ENCODE measurements at regions of chr22 and their contacts with region 1.

Region 1: DNA sequence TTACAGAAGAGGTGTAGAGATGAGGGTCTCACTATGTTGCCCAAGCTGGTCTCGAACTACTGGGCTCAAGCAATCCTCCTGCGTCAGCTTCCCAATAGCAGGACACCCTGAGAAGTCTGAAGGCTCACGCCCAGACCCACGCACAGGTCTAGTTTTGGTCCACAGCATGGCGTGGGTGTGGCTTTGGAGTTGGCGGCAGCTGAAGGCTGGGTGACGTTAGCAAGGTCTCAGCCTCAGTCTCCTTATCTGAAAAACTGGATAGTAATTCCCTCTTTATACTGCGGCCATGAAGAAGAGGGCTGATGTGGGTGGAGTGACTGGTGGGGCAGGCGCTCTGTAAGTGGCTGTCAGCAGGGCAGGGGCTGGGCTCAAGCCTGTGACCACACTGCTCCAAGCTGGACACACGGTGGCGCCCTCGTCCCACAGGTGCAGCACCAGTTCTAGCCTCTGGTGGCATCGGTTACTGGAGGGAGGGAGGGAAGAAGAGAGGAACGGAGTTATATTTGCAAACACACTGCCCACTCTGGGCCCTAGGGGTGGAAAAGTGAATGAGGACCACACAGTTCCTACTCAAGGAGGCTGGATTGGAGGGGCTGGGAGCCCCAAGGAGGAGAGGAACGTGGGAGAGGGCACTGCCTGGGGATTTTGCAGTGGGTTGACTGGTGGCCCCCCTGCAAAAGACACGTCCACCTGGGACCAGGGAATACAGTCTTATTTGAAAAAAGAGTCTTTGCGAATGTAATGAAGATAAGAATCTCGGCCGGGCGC is 19.6 kb upstream of the CARD10 start:
- DNase-seq: peak; percentile 91 to 95 (median 94)
- H3K4me3 ChIP-seq: no peak overlapping the region
- H3K27ac ChIP-seq: no peak overlapping the region
- H3K4me1 ChIP-seq: peaks cover 1% of the 10 kb centered on the region
- H3K27me3 ChIP-seq: no peaks in the 10 kb centered on the region
- CTCF ChIP-seq: peak; percentile 94 to 100 (median 99)
- EP300 ChIP-seq: no peak
- POLR2A ChIP-seq: peak; percentile 31

Region 2: GRCh38 chr22:37457093-37457893 is 81.5 kb before region 1 on chr22:
- intact Hi-C with region 1: no loop called
- DNase-seq: peak; percentile 15 to 61 (median 46)
- H3K4me3 ChIP-seq: no peak overlapping the region
- H3K27ac ChIP-seq: no peak overlapping the region
- H3K4me1 ChIP-seq: peaks cover 3% of the 10 kb centered on the region
- H3K27me3 ChIP-seq: no peaks in the 10 kb centered on the region
- CTCF ChIP-seq: peak in 1 of 3 donors; percentile 18
- EP300 ChIP-seq: no peak
- POLR2A ChIP-seq: no peak

Region 3: DNA sequence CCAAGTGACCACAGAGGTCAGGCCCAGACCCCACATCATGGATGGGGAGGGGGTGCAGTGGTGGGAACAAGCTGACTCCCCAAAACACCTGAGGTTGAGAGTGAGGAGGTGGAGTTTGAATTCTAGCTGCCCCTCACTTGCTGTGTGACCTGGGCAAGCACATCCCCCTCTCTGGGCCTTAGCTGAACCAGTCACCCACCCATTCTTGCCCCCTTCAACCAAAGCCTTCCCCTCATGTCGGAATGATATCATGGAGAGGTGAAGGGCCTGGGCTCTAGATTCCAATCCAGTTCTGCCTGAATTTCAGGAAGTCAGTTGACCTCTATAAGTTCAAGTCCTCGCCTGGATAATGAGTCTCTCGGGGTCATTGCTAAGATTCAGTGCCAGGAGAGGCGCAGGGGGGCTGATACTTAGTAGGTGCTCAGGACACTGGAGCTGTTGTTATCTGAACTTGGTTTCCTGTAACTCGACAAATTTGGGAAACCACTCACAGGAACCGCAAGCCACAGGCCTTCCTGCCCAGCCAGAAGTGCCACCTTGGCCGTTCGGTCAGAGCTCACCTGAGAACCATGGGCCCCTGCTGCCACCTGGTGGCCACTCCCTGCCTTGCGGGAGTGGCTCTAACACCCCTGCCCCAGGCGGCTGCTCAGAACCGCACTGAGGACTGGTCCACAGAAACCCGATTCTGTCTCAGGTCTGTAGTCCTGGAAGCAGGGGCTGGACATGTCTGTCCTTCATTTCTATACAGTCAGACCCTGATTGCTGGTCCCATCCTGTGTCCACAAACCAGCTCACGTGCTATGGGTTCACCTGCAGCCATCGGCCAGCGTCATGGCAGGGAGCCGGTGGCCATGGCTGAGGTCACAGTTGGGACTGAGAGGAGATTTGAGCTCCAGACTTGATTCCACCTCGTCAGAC is 28.4 kb after region 1 on chr22:
- intact Hi-C with region 1: loop called in 2 of 4 experiments (anchors 2 kb)
- DNase-seq: peak; percentile 71 to 89 (median 87)
- H3K4me3 ChIP-seq: no peak overlapping the region
- H3K27ac ChIP-seq: peak overlapping the region in 1 of 2 donors; percentile 25
- H3K4me1 ChIP-seq: peaks cover 17% of the 10 kb centered on the region
- H3K27me3 ChIP-seq: no peaks in the 10 kb centered on the region
- CTCF ChIP-seq: peak; percentile 87 to 96 (median 92)
- EP300 ChIP-seq: no peak
- POLR2A ChIP-seq: no peak

Region 4: DNA sequence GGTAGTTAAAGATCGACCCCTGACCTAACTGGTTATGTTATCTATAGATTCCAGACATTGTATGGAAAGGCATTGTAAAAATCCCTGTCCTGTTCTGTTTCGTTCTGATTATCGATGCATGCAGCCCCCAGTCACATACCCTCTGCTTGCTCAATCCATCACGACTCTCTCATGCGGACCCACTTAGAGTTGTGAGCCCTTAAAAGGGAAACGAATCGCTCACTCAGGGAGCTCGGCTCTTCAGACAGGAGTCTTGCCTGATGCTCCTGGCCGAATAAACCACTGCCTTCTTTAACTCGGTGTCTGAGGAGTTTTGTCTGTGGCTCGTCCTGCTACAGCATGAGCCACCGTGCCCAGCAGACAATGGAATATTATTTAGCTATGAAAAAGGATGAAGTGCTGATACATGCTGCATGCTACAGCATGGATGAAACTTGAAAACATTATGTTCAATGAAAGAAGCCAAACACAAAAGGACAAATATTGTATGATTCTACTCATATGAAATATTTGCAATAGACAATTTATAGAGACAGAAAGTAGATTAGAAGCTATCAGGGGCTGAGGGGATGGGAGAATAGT is 53.1 kb after region 1 on chr22:
- intact Hi-C with region 1: loop called (anchors 2 to 10 kb)
- DNase-seq: no peak
- H3K4me3 ChIP-seq: no peak overlapping the region
- H3K27ac ChIP-seq: no peak overlapping the region
- H3K4me1 ChIP-seq: no peaks in the 10 kb centered on the region
- H3K27me3 ChIP-seq: no peaks in the 10 kb centered on the region
- CTCF ChIP-seq: no peak
- EP300 ChIP-seq: no peak
- POLR2A ChIP-seq: no peak

Region 5: GRCh38 chr22:37599153-37599552 is 60.4 kb after region 1 on chr22:
- intact Hi-C with region 1: loop called in 3 of 4 experiments (anchors 5 to 10 kb)
- DNase-seq: no peak
- H3K4me3 ChIP-seq: no peak overlapping the region
- H3K27ac ChIP-seq: no peak overlapping the region
- H3K4me1 ChIP-seq: no peaks in the 10 kb centered on the region
- H3K27me3 ChIP-seq: no peaks in the 10 kb centered on the region
- CTCF ChIP-seq: no peak
- EP300 ChIP-seq: no peak
- POLR2A ChIP-seq: no peak

Measured in ovary (tissue), 10 donors.